Right ventricle myocardium superior (tissue), 1 donor: ENCODE measurements at regions of chr15 and their contacts with region 1.

Region 1: DNA sequence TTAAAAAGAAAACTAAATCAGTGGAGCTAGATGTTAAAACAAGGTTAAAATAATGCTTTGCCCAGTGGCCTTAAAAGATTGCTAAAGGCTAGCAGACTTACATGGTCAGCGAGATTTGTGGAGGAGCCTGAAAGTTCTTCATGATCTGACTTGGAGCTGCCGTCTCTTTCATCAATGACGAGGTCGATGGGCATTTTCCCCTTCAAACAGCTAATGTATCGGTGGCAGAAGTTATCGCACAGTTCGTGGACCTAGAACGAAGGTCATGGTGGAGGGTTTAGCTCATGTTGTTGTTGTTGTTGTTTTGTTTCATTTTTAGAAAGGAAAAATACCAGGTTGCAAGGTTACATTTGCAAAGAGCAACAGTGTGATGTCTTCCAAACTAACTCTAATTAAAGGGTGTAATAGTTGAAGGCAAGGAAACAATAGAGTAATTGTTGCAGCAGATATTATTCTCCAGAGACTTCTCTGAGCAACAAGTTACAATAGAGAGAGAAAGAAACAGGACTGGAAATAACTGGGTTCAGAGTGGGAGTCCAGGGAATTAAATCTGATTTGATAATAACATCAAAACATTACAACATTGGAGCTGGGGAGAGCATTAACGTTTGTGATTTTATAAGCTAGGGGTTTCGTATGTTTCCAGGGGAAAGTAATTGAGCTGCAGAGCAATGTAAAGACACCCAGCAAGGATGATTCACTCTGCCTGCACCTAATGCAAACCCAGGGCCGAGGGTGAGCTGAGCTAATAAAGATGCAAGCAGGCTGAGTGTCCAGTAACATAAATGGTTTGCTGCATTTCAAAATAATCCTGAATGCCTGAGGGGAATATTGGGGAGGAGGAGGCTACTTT is 6.6 kb downstream of the MEIS2 start:
- DNase-seq: no peak
- ATAC-seq: no peak

Region 2: GRCh38 chr15:37015035-37015434 is 78.7 kb before region 1 on chr15:
- intact Hi-C with region 1: loop called (anchors 5 kb)
- DNase-seq: no peak
- ATAC-seq: peak; percentile 77

Region 3: GRCh38 chr15:37165395-37165794 is 71.7 kb after region 1 on chr15:
- intact Hi-C with region 1: no loop called
- DNase-seq: no peak
- ATAC-seq: peak; percentile 96